ENCODE measurements at regions of chr4 and their contacts with region 1.

Region 1: DNA sequence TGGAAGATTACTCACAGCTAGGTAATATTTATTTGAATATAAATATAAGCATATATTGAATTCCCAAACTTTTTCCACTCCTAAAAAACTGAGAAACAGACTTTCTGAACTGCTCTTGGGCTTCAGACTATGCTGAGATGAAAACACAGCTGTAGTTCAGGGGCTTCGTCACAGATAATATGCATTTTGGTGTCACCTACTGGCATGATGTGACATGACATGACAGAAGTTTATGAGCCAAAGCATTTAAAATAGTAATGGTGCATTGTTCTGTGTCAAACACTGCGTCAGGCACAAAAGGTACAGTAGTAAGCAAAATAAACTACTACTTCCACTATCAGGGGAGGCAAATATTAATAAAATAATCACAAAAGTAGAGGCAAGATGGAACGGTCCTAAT is 171.3 kb downstream of the BTC start:
- DNase-seq: peak; percentile 62
- H3K4me3 Mint-ChIP-seq: no peak overlapping the region
- H3K27ac Mint-ChIP-seq: no peak overlapping the region
- H3K4me1 Mint-ChIP-seq: peaks cover 19% of the 10 kb centered on the region
- H3K27me3 Mint-ChIP-seq: peaks cover 5% of the 10 kb centered on the region

Region 2: DNA sequence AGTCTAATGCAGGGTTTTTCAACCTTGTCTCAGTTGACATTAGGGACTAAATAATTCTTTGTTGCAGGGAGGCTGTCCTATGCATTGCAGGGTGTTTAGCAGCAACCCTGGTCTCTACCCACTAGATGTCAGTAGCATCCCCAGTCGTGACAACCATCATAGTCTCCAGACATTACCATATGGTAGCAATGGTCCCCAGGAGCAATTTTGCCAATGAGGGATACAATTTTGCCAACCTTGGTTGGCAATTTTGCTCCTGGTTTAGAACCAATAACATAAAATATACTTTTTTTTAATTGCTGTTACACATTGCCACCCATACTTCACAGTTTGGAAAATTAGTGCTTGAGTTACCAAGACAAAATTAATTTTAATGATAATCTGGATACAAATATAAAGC is 252.1 kb before region 1 on chr4:
- intact Hi-C with region 1: loop called (anchors 1 kb)
- DNase-seq: peak; percentile 75
- H3K4me3 Mint-ChIP-seq: no peak overlapping the region
- H3K27ac Mint-ChIP-seq: no peak overlapping the region
- H3K4me1 Mint-ChIP-seq: peaks cover 2% of the 10 kb centered on the region
- H3K27me3 Mint-ChIP-seq: peaks cover 15% of the 10 kb centered on the region

Region 3: GRCh38 chr4:74376888-74377483 is 246.1 kb before region 1 on chr4:
- intact Hi-C with region 1: loop called (anchors 1 kb)
- DNase-seq: no peak
- H3K4me3 Mint-ChIP-seq: no peak overlapping the region
- H3K27ac Mint-ChIP-seq: no peak overlapping the region
- H3K4me1 Mint-ChIP-seq: peaks cover 2% of the 10 kb centered on the region
- H3K27me3 Mint-ChIP-seq: peaks cover 8% of the 10 kb centered on the region

Region 4: DNA sequence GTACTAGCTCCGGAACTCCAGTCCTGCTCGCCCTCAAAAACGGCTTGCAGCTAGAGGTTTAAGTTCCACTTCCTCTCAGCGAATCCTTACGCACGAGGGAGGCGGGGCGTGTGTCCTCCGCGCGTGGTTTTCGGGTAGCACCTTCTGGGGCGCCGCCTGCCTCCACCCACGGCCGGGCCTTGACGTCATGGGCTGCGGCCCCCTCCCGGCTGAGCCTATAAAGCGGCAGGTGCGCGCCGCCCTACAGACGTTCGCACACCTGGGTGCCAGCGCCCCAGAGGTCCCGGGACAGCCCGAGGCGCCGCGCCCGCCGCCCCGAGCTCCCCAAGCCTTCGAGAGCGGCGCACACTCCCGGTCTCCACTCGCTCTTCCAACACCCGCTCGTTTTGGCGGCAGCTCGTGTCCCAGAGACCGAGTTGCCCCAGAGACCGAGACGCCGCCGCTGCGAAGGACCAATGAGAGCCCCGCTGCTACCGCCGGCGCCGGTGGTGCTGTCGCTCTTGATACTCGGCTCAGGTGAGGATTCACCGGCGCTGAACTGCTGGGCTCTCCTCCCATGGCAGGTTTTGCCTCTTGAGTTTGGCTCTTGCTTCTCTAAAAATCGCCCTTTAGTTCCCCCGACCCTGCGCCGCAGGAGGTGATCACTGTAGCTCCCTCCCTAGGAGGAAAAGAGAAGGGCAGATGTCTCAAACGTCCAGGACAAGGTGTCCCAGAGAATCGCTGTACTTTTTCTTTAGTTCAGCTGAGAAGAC is 178.0 kb before region 1 on chr4 and contains the start of gene AREG:
- intact Hi-C with region 1: loop called (anchors 5 kb)
- DNase-seq: peak; percentile 94
- H3K4me3 Mint-ChIP-seq: peak within 1 kb of the TSS; percentile 94
- H3K27ac Mint-ChIP-seq: peak within 1 kb of the TSS; percentile 85
- H3K4me1 Mint-ChIP-seq: peaks cover 15% of the 10 kb centered on the region
- H3K27me3 Mint-ChIP-seq: peaks cover 14% of the 10 kb centered on the region
- total RNA-seq, gene AREG: 1.4 TPM in 2 replicates

Region 5: GRCh38 chr4:74531963-74532794 is 90.9 kb before region 1 on chr4:
- intact Hi-C with region 1: loop called (anchors 10 kb)
- DNase-seq: peak; percentile 62
- H3K4me3 Mint-ChIP-seq: no peak overlapping the region
- H3K27ac Mint-ChIP-seq: no peak overlapping the region
- H3K4me1 Mint-ChIP-seq: no peaks in the 10 kb centered on the region
- H3K27me3 Mint-ChIP-seq: peaks cover 4% of the 10 kb centered on the region